ENCODE measurements at regions of chr9 and their contacts with region 1.

Region 1: GRCh38 chr9:23413541-23413940 is 412.5 kb downstream of the ELAVL2 start:
- DNase-seq: no peak
- ATAC-seq: no peak
- H3K4me3 ChIP-seq: no peak overlapping the region
- H3K27ac ChIP-seq: no peak overlapping the region
- H3K4me1 ChIP-seq: no peaks in the 10 kb centered on the region
- H3K27me3 ChIP-seq: no peaks in the 10 kb centered on the region
- CTCF ChIP-seq: no peak

Region 2: DNA sequence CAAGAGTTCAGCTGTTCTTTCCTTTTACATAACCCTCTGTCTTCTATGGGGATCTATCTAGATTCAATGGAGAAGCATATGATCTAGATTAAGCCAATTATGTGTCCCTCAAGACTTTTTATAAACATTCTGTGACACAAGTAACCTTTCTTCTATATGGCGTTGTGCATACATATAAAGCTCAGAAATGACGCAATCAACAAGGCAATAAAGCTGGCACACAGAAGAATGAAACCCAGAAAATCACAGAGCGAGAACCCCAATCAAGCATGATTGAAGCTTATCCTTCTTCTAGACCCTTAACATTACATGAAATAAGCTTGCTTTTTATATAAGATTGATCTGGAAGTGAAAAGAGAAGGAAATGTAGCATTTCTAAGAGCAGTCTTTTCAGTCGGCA is 788.0 kb before region 1 on chr9:
- CTCF ChIA-PET with region 1: interaction called, 11 read pairs
- POLR2A ChIA-PET with region 1: no interaction called
- in situ Hi-C with region 1: no loop called
- intact Hi-C with region 1: no loop called
- DNase-seq: no peak
- ATAC-seq: no peak
- H3K4me3 ChIP-seq: no peak overlapping the region
- H3K27ac ChIP-seq: no peak overlapping the region
- H3K4me1 ChIP-seq: no peaks in the 10 kb centered on the region
- H3K27me3 ChIP-seq: no peaks in the 10 kb centered on the region
- CTCF ChIP-seq: no peak

Region 3: DNA sequence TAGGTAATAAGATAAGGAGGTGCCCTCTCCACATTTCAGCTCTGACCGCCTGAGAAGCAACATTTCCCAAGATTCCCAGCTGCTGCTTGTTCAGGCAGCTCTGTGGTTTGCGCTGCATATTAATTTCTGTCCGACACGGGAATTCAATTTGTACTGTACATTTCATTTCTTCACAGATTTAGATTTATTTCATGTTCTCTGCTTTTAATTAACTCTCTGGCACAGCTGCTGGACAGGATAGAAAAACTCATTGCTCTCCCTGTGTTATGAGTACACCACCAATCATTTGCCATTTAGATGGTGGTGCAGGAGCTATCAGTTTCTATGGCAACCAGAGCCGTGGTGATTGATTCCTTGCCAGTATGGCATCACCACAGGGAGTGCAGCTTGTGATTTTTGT is 408.4 kb before region 1 on chr9:
- CTCF ChIA-PET with region 1: no interaction called
- POLR2A ChIA-PET with region 1: no interaction called
- in situ Hi-C with region 1: no loop called
- intact Hi-C with region 1: no loop called
- DNase-seq: no peak
- ATAC-seq: no peak
- H3K4me3 ChIP-seq: no peak overlapping the region
- H3K27ac ChIP-seq: no peak overlapping the region
- H3K4me1 ChIP-seq: no peaks in the 10 kb centered on the region
- H3K27me3 ChIP-seq: no peaks in the 10 kb centered on the region
- CTCF ChIP-seq: no peak